Psoas muscle (tissue), 8 donors: ENCODE measurements at regions of chrX and their contacts with region 1.

Region 1: DNA sequence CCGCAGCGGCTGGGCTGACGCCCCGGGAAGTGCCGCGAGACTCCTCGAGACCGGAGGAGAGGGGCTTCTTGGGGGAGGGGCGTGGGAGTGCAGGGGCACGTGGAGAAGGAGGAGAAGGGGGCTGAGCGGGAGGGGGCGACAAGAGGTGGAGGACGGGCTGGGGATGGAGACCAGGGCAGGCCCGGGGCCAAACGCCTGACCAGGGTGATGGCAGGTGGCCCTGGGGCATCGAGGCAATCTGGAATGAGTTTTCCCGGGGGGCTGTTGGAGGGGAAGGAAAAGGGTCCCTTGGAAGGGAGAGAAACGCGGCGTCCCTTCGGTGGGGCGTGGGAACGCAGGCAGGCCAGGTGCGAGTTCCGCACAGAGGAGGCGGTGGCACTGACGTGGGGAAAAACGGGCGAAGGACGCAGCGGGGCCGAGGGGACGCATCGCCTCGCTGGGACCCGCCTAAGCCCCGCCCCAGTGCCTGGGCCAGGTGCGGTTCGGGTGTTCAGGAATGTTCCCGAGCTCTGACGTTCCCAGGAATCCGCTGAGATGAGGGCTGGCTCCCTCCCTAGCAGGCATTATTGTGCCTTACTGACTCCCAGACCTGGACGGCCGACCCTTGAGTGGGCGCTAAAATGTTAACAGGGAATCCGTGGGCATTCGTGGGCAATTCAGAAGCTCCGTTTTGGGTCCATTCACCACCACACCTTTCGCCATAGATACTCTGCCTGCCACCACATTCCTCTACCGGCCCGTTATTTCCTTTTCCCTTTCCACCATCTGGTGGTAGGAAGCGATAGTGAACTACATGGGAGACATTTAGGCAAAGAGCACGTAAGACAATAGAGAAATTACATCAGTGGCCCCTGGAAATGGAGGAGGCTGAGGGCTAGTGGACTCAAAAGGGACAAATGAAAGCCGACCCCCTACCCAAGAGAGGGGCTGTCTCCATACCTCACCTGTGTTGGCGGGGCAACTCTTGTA is 795 bp upstream of the SH3KBP1 start:
- DNase-seq: peak; percentile 35 to 60
- ATAC-seq: peak; percentile 73 to 87 (median 78)
- H3K4me3 ChIP-seq: peak overlapping the region; percentile 78
- H3K27ac ChIP-seq: no peak overlapping the region
- H3K4me1 ChIP-seq: no peaks in the 10 kb centered on the region
- H3K27me3 ChIP-seq: peaks cover 0 to 7% (median 0%) of the 10 kb centered on the region in 3 donors
- CTCF ChIP-seq: peak; percentile 46

Region 2: GRCh38 chrX:19372170-19372546 is 516.0 kb before region 1 on chrX:
- intact Hi-C with region 1: loop called in 1 of 2 experiments (anchors 10 kb)
- DNase-seq: peak; percentile 52 to 70
- ATAC-seq: peak; percentile 56 to 81 (median 69)
- H3K4me3 ChIP-seq: peak overlapping the region; percentile 54
- H3K27ac ChIP-seq: no peak overlapping the region
- H3K4me1 ChIP-seq: no peaks in the 10 kb centered on the region
- H3K27me3 ChIP-seq: peaks cover 0 to 9% (median 0%) of the 10 kb centered on the region in 3 donors
- CTCF ChIP-seq: peak; percentile 56

Region 3: DNA sequence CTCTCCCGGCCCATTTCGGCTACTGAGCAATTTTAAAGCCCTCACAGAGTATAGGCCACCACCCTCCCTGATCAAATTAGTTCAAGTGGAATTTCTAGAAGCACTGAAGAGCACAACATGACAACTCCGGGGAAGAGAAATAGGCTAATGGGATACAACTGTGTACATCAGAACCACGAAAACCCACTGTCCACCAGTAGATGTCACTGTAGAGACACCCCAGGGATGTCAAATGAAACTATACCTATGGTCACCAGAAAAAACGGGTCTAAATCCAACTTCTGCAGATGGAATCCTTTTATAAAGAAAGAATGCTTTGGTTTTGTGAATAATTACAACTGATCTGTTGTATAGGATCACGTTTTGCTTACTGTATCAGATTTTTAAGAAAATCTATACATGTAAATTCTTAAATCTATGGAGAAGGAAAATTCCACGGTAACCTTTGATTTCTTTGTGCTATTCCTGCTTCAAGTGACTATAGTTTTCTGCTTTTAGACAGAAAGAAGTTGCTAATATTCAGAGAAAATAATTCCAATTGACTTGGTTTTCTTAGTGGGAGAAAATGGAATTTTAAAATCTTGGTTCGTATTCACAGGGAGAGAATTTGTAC is 343.4 kb before region 1 on chrX:
- intact Hi-C with region 1: loop called (anchors 5 to 10 kb)
- DNase-seq: no peak
- ATAC-seq: peak; percentile 62 to 82 (median 74)
- H3K4me3 ChIP-seq: no peak overlapping the region
- H3K27ac ChIP-seq: no peak overlapping the region
- H3K4me1 ChIP-seq: no peaks in the 10 kb centered on the region
- H3K27me3 ChIP-seq: no peaks in the 10 kb centered on the region
- CTCF ChIP-seq: peak; percentile 78

Region 4: GRCh38 chrX:19593690-19594089 is 294.5 kb before region 1 on chrX:
- intact Hi-C with region 1: loop called (anchors 2 to 10 kb)
- DNase-seq: no peak
- ATAC-seq: peak in 2 of 4 donors; percentile 46 to 59
- H3K4me3 ChIP-seq: no peak overlapping the region
- H3K27ac ChIP-seq: no peak overlapping the region
- H3K4me1 ChIP-seq: no peaks in the 10 kb centered on the region
- H3K27me3 ChIP-seq: no peaks in the 10 kb centered on the region
- CTCF ChIP-seq: peak; percentile 37

Region 5: DNA sequence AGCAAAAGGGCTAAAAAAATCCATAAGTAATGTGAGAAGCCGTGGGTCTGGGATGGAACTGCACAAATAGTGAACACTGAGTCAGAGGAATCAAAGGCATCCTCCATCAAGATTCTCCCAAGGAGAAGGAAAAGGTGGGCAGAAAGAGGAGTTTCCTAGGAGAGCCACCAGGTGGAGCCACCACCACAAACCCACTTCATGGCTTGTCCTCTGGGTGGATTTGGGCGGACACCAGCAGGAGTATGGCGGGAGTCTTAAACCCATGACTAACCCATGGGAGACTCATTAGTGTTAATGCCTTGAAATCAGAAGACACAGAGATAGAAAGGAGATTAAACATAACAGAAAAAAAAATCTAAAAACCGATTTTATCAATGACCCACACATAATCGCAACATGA is 148.5 kb before region 1 on chrX:
- intact Hi-C with region 1: loop called (anchors 5 to 10 kb)
- DNase-seq: peak; percentile 53 to 69
- ATAC-seq: peak; percentile 42 to 70 (median 68)
- H3K4me3 ChIP-seq: no peak overlapping the region
- H3K27ac ChIP-seq: no peak overlapping the region
- H3K4me1 ChIP-seq: no peaks in the 10 kb centered on the region
- H3K27me3 ChIP-seq: no peaks in the 10 kb centered on the region
- CTCF ChIP-seq: peak; percentile 57

Region 6: GRCh38 chrX:19846995-19847790 is 41.0 kb before region 1 on chrX:
- intact Hi-C with region 1: no loop called
- DNase-seq: peak in 1 of 2 donors; percentile 41
- ATAC-seq: no peak
- H3K4me3 ChIP-seq: no peak overlapping the region
- H3K27ac ChIP-seq: no peak overlapping the region
- H3K4me1 ChIP-seq: no peaks in the 10 kb centered on the region
- H3K27me3 ChIP-seq: no peaks in the 10 kb centered on the region
- CTCF ChIP-seq: no peak

Region 7: DNA sequence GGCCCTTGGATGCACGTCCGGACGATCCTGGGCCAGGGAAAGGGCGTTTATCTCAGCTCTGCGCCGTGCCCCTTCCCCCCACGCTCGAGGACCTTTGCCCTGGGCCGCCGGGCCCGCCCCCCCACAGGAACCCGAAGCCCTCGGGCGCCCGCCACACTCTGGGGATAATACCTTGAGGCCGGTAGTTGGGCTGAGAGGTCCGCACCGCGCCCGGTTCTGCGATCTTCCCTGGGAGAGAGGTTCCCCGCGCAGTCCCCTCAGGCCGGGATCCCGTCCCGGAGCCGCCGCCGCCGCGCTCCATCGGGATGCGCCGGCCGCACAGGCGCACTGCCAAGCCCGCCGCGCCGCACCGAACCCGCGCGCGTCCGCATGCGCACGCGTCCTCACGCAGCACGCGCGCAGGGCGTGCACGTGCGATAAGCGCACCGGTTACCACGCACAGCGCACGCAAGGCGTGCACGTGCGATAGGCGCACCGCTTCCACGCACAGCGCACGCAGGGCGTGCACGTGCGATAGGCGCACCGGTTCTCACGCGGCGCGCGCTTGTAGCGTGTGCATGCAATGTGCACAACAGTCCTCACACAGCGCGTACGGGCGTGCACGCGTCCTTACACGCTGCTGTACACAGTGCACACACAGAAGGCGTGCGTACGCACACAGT is 228.5 kb after region 1 on chrX and contains the start of gene MAP7D2:
- intact Hi-C with region 1: loop called in 1 of 2 experiments (anchors 10 kb)
- DNase-seq: no peak
- ATAC-seq: peak; percentile 27 to 53 (median 38)
- H3K4me3 ChIP-seq: peak within 1 kb of the TSS; percentile 53
- H3K27ac ChIP-seq: no peak within 1 kb of the TSS
- H3K4me1 ChIP-seq: no peaks in the 10 kb centered on the region
- H3K27me3 ChIP-seq: peaks cover 0 to 16% (median 0%) of the 10 kb centered on the region in 3 donors
- CTCF ChIP-seq: no peak
- total RNA-seq, gene MAP7D2: 0.32 to 1.2 (median 0.48) TPM in 3 of 4 donors, not detected in the other

Region 8: DNA sequence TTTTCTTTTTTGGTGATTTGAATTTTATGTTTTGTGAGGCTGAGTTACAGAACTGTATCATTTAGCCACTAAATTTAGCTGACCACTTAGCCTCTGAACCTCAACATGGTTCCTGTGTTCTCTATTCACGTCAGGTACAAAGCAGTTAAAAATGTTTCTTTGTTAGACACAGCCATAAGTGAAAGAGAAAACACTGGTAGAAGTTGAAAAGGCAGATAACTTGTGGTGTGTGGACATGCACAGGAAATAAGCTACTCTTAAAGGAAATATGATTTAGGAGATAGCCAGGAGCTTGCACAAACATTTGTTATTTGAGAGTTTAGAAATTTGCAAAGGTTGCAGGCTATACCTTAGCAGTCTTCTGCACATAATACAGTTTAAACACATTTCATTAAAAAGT is 549.5 kb after region 1 on chrX:
- intact Hi-C with region 1: no loop called
- DNase-seq: no peak
- ATAC-seq: no peak
- H3K4me3 ChIP-seq: no peak overlapping the region
- H3K27ac ChIP-seq: no peak overlapping the region
- H3K4me1 ChIP-seq: no peaks in the 10 kb centered on the region
- H3K27me3 ChIP-seq: no peaks in the 10 kb centered on the region
- CTCF ChIP-seq: no peak